ENCODE measurements at regions of chr11 and their contacts with region 1.

Region 1: GRCh38 chr11:10540923-10541560 is at the start of gene RNF141:
- DNase-seq: peak; percentile 87 to 99 (median 94)
- ATAC-seq: peak; percentile 99
- H3K4me3 ChIP-seq: peak within 1 kb of the TSS; percentile 81
- H3K4me3 Mint-ChIP-seq: peak within 1 kb of the TSS; percentile 86 to 93 (median 90)
- H3K27ac ChIP-seq: peak within 1 kb of the TSS; percentile 90
- H3K27ac Mint-ChIP-seq: peak within 1 kb of the TSS; percentile 68 to 95 (median 86)
- H3K4me1 ChIP-seq: peaks cover 0 to 8% of the 10 kb centered on the region in 2 donors
- H3K4me1 Mint-ChIP-seq: peaks cover 9 to 37% (median 27%) of the 10 kb centered on the region in 7 donors
- H3K27me3 ChIP-seq: no peaks in the 10 kb centered on the region
- H3K27me3 Mint-ChIP-seq: no peaks in the 10 kb centered on the region
- total RNA-seq, gene RNF141: 11.9 to 22.7 (median 17.3) TPM

Region 2: GRCh38 chr11:10351768-10352641 is 189.0 kb before region 1 on chr11:
- CTCF ChIA-PET with region 1: no interaction called
- POLR2A ChIA-PET with region 1: no interaction called
- intact Hi-C with region 1: no loop called
- DNase-seq: no peak
- ATAC-seq: no peak
- H3K4me3 ChIP-seq: no peak overlapping the region
- H3K4me3 Mint-ChIP-seq: no peak overlapping the region
- H3K27ac ChIP-seq: no peak overlapping the region
- H3K27ac Mint-ChIP-seq: no peak overlapping the region
- H3K4me1 ChIP-seq: no peaks in the 10 kb centered on the region
- H3K4me1 Mint-ChIP-seq: no peaks in the 10 kb centered on the region
- H3K27me3 ChIP-seq: peaks cover 0 to 5% of the 10 kb centered on the region in 2 donors
- H3K27me3 Mint-ChIP-seq: peaks cover 11 to 34% (median 17%) of the 10 kb centered on the region in 5 donors

Region 3: GRCh38 chr11:10405855-10406592 is 135.0 kb before region 1 on chr11:
- CTCF ChIA-PET with region 1: interaction called, 3 read pairs
- POLR2A ChIA-PET with region 1: no interaction called
- intact Hi-C with region 1: loop called in 1 of 2 experiments (anchors 2 kb)
- DNase-seq: peak in 8 of 9 donors; percentile 30 to 56 (median 46)
- ATAC-seq: peak; percentile 82
- H3K4me3 ChIP-seq: no peak overlapping the region
- H3K4me3 Mint-ChIP-seq: no peak overlapping the region
- H3K27ac ChIP-seq: no peak overlapping the region
- H3K27ac Mint-ChIP-seq: peak overlapping the region in 1 of 9 donors; percentile 50
- H3K4me1 ChIP-seq: peaks cover 4 to 12% of the 10 kb centered on the region in 2 donors
- H3K4me1 Mint-ChIP-seq: peaks cover 5 to 34% (median 27%) of the 10 kb centered on the region in 7 donors
- H3K27me3 ChIP-seq: no peaks in the 10 kb centered on the region
- H3K27me3 Mint-ChIP-seq: peaks cover 0 to 2% (median 0%) of the 10 kb centered on the region in 5 donors

Region 4: DNA sequence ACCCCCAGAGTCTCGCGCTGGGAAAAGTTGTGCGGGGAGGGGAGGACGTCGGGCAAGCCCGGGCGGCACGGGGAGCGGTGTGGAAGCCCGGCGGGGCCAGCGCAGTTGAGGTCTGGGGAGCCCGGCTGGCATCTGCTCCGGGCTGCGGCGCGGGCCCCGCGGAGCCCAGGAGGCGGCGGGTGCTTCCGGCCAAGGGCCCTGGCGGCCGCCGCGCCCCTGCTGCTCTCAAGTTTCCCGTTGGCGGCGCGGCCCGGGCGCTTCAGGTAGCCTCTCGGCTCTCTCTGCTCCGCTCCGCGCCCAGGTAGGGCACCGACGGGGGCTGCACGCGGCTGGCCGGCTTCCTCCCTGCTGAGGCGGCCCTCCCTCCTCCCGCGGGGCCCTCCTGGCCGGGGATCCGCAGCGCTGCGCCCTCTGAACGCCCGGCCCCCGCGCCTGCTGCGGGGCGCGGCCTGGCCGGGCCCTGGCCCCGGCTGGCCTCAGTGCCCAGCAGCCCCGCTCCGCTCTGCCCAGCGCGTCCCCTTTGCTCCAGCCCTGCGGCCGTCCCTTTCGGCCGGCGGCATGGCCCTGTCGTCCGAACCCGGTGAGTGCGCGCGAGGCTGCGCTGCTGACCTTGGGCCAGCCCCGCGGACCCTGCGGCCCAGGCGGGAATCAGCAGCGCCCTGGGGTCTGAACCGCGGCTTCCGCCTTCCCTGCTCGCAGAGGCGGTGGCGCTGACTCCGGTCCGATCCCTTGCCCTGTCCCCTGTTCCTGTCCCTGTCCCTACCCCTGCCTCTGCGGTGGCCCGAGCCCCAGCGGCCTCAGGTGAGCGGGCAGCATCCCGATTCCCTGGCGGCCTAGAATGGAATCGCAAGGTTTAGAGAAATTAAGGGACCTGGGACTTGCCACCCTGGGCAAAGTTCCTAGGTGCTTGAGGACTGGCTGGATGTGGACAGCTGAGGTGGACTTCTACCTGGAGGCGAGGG is 90.3 kb before region 1 on chr11:
- CTCF ChIA-PET with region 1: interaction called, 3 read pairs
- POLR2A ChIA-PET with region 1: interaction called, 15 read pairs
- intact Hi-C with region 1: loop called in 1 of 2 experiments (anchors 1 kb)
- DNase-seq: peak; percentile 34 to 66 (median 59)
- ATAC-seq: peak; percentile 66
- H3K4me3 ChIP-seq: peak overlapping the region; percentile 63
- H3K4me3 Mint-ChIP-seq: peak overlapping the region; percentile 88 to 96 (median 92)
- H3K27ac ChIP-seq: peak overlapping the region; percentile 84
- H3K27ac Mint-ChIP-seq: peak overlapping the region; percentile 87 to 97 (median 95)
- H3K4me1 ChIP-seq: peaks cover 24 to 44% of the 10 kb centered on the region in 2 donors
- H3K4me1 Mint-ChIP-seq: peaks cover 43 to 75% (median 68%) of the 10 kb centered on the region in 7 donors
- H3K27me3 ChIP-seq: no peaks in the 10 kb centered on the region
- H3K27me3 Mint-ChIP-seq: peaks cover 0 to 23% (median 0%) of the 10 kb centered on the region in 5 donors

Region 5: DNA sequence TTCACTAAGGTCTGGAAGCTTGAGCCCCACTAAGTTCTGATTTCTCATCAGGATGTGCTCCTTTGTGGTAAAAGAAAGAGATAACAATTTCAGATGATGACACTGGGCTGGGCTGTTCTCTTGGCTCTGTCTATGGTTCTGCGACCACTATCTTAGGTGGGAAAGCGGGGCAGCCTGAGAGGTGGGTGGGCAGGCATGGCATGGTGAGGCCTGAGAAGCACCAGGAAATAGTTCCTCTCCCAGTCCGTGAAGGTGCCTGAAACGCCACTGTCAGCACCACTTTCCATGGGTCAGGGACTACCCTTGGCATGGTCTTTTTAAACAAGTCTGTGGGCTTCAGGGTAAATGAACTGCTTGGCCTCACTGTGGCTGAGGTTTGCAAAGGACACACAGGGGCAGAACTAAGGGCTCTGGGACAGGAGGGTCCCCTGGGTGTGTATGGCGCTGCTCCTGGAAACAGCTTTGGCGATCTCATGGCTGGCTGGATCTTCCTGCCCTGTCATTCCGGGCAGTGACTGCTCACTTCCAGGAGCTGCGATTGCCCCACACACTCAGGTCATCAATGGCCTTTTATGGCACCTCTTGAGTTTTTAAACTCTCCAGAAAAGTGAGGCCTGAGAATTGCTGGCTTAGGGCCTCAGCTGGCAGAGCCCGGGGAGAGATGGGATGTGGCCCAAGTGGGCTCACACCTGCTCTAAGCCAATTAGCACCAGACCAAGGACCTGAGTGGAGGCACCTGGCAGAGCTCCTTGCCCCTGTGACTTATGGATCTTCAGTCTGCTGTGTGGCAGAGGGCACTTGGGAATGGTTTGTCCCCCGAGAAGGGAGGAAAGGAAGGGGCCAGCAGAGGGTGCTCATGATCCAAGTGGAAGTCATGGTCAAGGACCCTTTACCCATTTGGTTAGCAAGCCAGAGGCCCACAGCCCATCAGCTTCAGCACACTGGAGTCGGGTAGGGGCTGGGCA is 83.0 kb after region 1 on chr11:
- CTCF ChIA-PET with region 1: no interaction called
- POLR2A ChIA-PET with region 1: no interaction called
- intact Hi-C with region 1: loop called in 1 of 2 experiments (anchors 5 kb)
- DNase-seq: no peak
- ATAC-seq: no peak
- H3K4me3 ChIP-seq: peak overlapping the region; percentile 24
- H3K4me3 Mint-ChIP-seq: peak overlapping the region; percentile 36 to 82 (median 70)
- H3K27ac ChIP-seq: peak overlapping the region; percentile 24
- H3K27ac Mint-ChIP-seq: peak overlapping the region; percentile 85 to 96 (median 91)
- H3K4me1 ChIP-seq: peaks cover 4 to 35% of the 10 kb centered on the region in 2 donors
- H3K4me1 Mint-ChIP-seq: peaks cover 17 to 36% (median 25%) of the 10 kb centered on the region in 7 donors
- H3K27me3 ChIP-seq: no peaks in the 10 kb centered on the region
- H3K27me3 Mint-ChIP-seq: peaks cover 0 to 2% (median 0%) of the 10 kb centered on the region in 5 donors

Region 6: DNA sequence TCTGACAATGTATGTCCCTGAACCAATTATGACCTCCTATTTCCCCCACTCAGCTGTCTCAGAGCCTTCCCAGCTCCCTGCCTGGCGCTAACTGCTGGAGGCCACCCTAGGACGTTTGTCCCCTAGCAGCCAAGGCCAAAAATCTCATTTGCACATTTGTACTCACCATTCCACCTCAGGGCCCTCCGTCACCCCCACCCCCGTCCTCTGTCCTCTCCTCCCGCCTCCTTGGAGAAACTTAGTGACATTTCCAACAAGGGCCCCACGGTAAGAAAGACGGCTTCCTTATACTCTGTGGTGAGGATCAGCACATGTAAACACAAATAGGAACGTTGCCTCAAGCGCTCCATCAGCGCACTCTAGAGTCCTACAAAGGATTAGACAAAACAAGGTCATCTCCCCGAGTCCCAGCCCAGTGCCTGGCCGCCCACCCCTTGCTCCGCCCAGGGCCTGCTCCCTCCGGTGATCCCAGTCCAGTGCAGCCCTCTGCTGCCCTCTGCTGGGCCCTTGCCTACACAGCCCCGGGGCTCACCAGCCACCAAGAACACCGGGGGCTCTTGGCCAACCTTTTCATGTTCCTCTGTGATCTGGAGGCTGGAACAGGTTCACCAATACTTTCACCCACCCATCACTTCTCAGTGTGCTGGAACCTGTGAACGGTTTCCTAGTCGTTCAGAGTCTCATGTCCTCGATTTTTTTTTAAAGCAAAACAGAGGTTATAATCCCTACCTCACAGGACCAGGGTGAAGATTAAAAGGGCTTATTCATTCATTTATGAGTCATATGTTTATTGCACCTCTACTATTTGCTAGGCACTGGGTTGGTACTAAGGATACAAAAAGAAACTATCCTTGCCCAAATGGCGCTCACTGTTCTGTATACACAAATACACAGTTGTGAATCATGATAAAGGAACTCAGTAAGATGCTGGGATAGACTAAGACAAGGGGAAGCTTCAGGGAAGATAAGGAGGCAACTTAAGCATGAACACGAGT is 194.7 kb after region 1 on chr11:
- CTCF ChIA-PET with region 1: no interaction called
- POLR2A ChIA-PET with region 1: no interaction called
- intact Hi-C with region 1: loop called (anchors 5 kb)
- DNase-seq: peak; percentile 62 to 92 (median 77)
- ATAC-seq: peak; percentile 100
- H3K4me3 ChIP-seq: no peak overlapping the region
- H3K4me3 Mint-ChIP-seq: peak overlapping the region in 8 of 10 donors; percentile 8 to 75 (median 62)
- H3K27ac ChIP-seq: no peak overlapping the region
- H3K27ac Mint-ChIP-seq: peak overlapping the region in 5 of 9 donors; percentile 31 to 71 (median 59)
- H3K4me1 ChIP-seq: peaks cover 0 to 4% of the 10 kb centered on the region in 2 donors
- H3K4me1 Mint-ChIP-seq: peaks cover 5 to 13% (median 8%) of the 10 kb centered on the region in 7 donors
- H3K27me3 ChIP-seq: no peaks in the 10 kb centered on the region
- H3K27me3 Mint-ChIP-seq: peaks cover 4 to 19% (median 12%) of the 10 kb centered on the region in 5 donors

Region 7: DNA sequence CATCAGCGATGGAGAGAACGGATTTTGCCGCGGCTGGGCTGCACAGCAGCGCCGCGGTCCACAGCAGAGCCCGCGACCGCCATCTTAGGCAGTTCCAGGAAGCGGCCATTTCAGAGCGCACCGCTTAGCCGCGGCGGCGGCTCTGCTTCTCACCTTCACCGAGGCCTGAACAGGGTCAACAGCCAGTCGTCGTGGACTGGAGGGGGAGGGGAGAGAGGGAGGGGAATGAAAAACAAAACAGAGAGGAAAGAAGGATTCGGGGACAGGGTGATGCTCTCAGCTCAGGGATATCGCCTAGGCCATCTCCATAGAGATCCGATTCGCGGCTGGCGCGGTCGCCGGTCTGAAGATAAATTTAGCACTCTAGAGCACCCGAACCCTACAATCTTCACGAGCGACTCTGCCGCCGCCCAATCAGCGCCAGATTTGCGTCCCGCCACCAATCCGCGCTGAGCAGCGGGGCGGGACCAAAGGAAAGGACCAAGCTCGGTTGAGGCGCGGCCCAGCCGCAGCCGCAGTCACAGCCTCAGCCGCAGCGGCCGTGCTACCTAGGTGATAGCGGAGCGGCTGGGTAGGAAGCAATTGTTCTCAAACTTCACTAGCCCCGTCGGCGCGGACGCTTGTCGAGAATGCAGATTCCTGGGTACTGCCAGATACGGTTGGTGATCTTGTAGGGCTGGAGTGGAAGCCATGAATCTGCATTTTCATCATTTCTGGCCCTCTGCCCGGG is 316.8 kb after region 1 on chr11 and contains the start of gene ZBED5:
- CTCF ChIA-PET with region 1: no interaction called
- POLR2A ChIA-PET with region 1: no interaction called
- intact Hi-C with region 1: loop called (anchors 2 kb)
- DNase-seq: peak; percentile 93 to 97 (median 96)
- ATAC-seq: peak; percentile 94
- H3K4me3 ChIP-seq: peak within 1 kb of the TSS; percentile 91
- H3K4me3 Mint-ChIP-seq: peak within 1 kb of the TSS; percentile 94 to 100 (median 99)
- H3K27ac ChIP-seq: peak within 1 kb of the TSS; percentile 91
- H3K27ac Mint-ChIP-seq: peak within 1 kb of the TSS; percentile 98 to 100 (median 100)
- H3K4me1 ChIP-seq: peaks cover 5 to 9% of the 10 kb centered on the region in 2 donors
- H3K4me1 Mint-ChIP-seq: peaks cover 20 to 73% (median 60%) of the 10 kb centered on the region in 7 donors
- H3K27me3 ChIP-seq: no peaks in the 10 kb centered on the region
- H3K27me3 Mint-ChIP-seq: peaks cover 0 to 2% (median 0%) of the 10 kb centered on the region in 5 donors
- total RNA-seq, gene ZBED5: 56.7 to 146 (median 94.0) TPM

Region 8: DNA sequence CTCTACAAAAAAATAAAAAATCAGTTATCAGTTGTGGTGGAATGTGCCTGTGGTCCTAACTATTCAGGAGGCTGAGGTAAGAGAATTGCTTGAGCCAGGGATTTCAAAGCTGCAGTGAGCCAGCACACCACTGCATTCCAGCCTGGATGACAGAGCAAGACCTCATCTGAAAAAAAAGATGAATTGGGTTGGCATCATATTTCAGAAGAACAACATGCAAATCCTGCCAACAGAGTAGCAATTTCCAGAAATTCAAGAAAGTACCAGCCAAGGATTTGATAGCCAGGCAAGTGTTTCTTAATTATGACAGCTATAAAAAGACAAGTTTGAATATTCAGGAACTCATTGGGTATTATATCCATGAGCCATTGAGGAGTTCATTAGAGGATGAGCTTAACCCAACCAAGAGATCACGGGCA is 1375.9 kb after region 1 on chr11:
- CTCF ChIA-PET with region 1: no interaction called
- POLR2A ChIA-PET with region 1: no interaction called
- intact Hi-C with region 1: no loop called
- DNase-seq: no peak
- ATAC-seq: no peak
- H3K4me3 ChIP-seq: no peak overlapping the region
- H3K4me3 Mint-ChIP-seq: no peak overlapping the region
- H3K27ac ChIP-seq: no peak overlapping the region
- H3K27ac Mint-ChIP-seq: peak overlapping the region in 8 of 9 donors; percentile 6 to 87 (median 45)
- H3K4me1 ChIP-seq: no peaks in the 10 kb centered on the region
- H3K4me1 Mint-ChIP-seq: peaks cover 0 to 13% (median 7%) of the 10 kb centered on the region in 7 donors
- H3K27me3 ChIP-seq: no peaks in the 10 kb centered on the region
- H3K27me3 Mint-ChIP-seq: no peaks in the 10 kb centered on the region

Measured in naive thymus-derived CD4-positive, alpha-beta T cell (primary cell).